CD8-positive, alpha-beta T cell (primary cell): ENCODE measurements at regions of chr3 and their contacts with region 1.

Region 1: DNA sequence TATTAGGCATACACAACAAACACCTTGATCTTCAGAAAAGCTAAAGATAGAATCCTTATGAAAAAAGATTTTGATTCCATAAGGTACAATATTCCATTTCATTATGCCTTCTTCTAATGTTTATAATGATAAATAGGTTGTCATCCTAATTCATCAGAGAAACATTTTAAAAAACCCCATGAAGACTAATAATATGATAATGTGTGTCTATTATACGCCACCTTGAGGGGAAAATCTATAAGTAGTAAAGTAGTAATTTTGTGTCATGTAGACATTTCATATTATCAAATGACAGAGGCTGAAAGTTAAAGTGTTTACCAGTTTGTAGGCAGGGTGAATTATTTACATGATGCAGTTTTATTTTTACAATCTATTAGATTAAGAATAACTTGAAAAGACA is 524.3 kb downstream of the GBE1 start:
- DNase-seq: no peak
- ATAC-seq: no peak
- H3K4me3 ChIP-seq: no peak overlapping the region
- H3K4me3 Mint-ChIP-seq: no peak overlapping the region
- H3K27ac ChIP-seq: no peak overlapping the region
- H3K27ac Mint-ChIP-seq: no peak overlapping the region
- H3K4me1 ChIP-seq: no peaks in the 10 kb centered on the region
- H3K4me1 Mint-ChIP-seq: no peaks in the 10 kb centered on the region
- H3K27me3 ChIP-seq: no peaks in the 10 kb centered on the region
- H3K27me3 Mint-ChIP-seq: no peaks in the 10 kb centered on the region
- CTCF ChIP-seq: no peak

Region 2: GRCh38 chr3:81300324-81300927 is 63.2 kb after region 1 on chr3:
- CTCF ChIA-PET with region 1: no interaction called
- POLR2A ChIA-PET with region 1: no interaction called
- intact Hi-C with region 1: loop called in 1 of 2 experiments (anchors 2 kb)
- DNase-seq: no peak
- ATAC-seq: no peak
- H3K4me3 ChIP-seq: no peak overlapping the region
- H3K4me3 Mint-ChIP-seq: no peak overlapping the region
- H3K27ac ChIP-seq: no peak overlapping the region
- H3K27ac Mint-ChIP-seq: no peak overlapping the region
- H3K4me1 ChIP-seq: no peaks in the 10 kb centered on the region
- H3K4me1 Mint-ChIP-seq: no peaks in the 10 kb centered on the region
- H3K27me3 ChIP-seq: no peaks in the 10 kb centered on the region
- H3K27me3 Mint-ChIP-seq: no peaks in the 10 kb centered on the region
- CTCF ChIP-seq: no peak